CD4-positive, alpha-beta T cell (primary cell): ENCODE measurements at regions of chr1 and their contacts with region 1.

Region 1: GRCh38 chr1:1535990-1536937 is 4.2 kb downstream of the TMEM240 start:
- DNase-seq: peak in 1 of 14 experiments; percentile 32
- ATAC-seq: no peak
- H3K4me3 ChIP-seq: no peak overlapping the region
- H3K4me3 Mint-ChIP-seq: no peak overlapping the region
- H3K27ac ChIP-seq: no peak overlapping the region
- H3K27ac Mint-ChIP-seq: no peak overlapping the region
- H3K4me1 ChIP-seq: peaks cover 16% of the 10 kb centered on the region
- H3K4me1 Mint-ChIP-seq: no peaks in the 10 kb centered on the region
- H3K27me3 ChIP-seq: no peaks in the 10 kb centered on the region
- H3K27me3 Mint-ChIP-seq: no peaks in the 10 kb centered on the region
- CTCF ChIP-seq: no peak

Region 2: GRCh38 chr1:1489231-1489630 is 47.0 kb before region 1 on chr1:
- CTCF ChIA-PET with region 1: no interaction called
- POLR2A ChIA-PET with region 1: no interaction called
- intact Hi-C with region 1: loop called in 1 of 2 experiments (anchors 2 kb)
- DNase-seq: no peak
- ATAC-seq: no peak
- H3K4me3 ChIP-seq: no peak overlapping the region
- H3K4me3 Mint-ChIP-seq: no peak overlapping the region
- H3K27ac ChIP-seq: no peak overlapping the region
- H3K27ac Mint-ChIP-seq: no peak overlapping the region
- H3K4me1 ChIP-seq: no peaks in the 10 kb centered on the region
- H3K4me1 Mint-ChIP-seq: no peaks in the 10 kb centered on the region
- H3K27me3 ChIP-seq: no peaks in the 10 kb centered on the region
- H3K27me3 Mint-ChIP-seq: no peaks in the 10 kb centered on the region
- CTCF ChIP-seq: no peak